ENCODE measurements at regions of chr11 and their contacts with region 1.

Region 1: DNA sequence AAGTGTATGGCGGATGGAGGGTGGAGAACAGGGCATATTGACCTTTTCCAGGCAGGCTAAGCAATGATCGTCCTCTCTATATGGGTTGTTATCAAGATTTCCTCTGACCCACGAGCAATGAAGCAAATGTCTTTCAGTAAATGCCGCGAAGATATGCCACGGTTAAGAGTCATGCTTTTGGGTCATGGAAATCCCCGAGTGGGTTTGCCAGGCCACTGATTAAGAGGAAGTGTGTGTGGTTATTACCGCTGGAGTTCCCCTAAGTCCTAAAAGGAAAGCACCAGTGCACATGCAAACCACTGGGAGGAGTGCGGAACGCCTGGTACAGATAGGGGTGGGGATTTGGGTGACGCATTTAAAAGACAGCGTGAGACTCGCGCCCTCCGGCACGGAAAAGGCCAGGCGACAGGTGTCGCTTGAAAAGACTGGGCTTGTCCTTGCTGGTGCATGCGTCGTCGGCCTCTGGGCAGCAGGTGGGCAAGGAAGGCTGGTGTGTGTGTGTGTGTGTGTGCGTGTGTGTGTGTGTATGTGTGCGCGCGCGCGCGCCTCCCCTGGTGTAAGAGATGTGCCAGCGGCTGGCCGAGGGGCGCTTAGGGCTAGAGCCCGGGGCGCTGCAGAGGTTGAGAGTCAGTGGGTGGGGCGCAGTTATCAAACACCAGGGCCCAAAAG is at the start of gene BIRC3:
- DNase-seq: peak; percentile 92
- ATAC-seq: peak; percentile 90
- H3K4me3 Mint-ChIP-seq: peak within 1 kb of the TSS; percentile 89
- H3K27ac Mint-ChIP-seq: peak within 1 kb of the TSS; percentile 94
- H3K4me1 Mint-ChIP-seq: peaks cover 66% of the 10 kb centered on the region
- H3K27me3 Mint-ChIP-seq: no peaks in the 10 kb centered on the region
- total RNA-seq, gene BIRC3: 12.9 to 14.5 TPM

Region 2: GRCh38 chr11:102064316-102064715 is 252.9 kb before region 1 on chr11:
- CTCF ChIA-PET with region 1: no interaction called
- POLR2A ChIA-PET with region 1: no interaction called
- DNase-seq: no peak
- ATAC-seq: no peak
- H3K4me3 Mint-ChIP-seq: no peak overlapping the region
- H3K27ac Mint-ChIP-seq: no peak overlapping the region
- H3K4me1 Mint-ChIP-seq: no peaks in the 10 kb centered on the region
- H3K27me3 Mint-ChIP-seq: peaks cover 2% of the 10 kb centered on the region

Region 3: DNA sequence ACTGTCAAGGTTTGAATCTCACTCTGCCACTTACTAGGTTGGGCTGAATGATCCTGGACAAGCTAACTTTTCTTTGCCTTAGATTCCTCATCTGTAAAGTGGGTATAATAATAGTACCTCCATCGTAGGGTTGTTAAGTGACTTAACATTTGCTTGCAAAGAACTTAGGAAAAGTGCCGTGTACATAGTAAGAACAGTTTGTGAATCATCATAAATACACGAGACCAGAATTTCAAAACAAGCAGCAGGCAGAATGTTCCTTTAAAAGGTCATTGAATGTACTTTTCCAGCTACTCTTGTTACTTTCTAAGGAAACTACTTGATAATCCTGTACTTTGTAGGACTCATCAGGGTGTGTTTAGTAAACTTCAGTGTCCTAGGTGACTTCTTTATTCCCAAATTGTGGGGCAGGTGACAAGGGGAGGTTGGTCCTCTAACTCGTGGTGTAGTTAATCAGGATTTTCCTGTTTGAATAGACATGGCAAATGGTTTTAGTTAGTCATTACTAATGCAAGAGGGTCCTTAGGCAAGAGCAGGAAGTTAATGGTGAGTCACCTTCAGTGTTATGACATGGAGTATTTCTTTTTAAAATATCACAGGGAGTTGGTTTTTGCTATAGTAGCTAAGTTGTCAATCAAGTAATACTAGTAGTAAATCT is 139.1 kb before region 1 on chr11:
- CTCF ChIA-PET with region 1: no interaction called
- POLR2A ChIA-PET with region 1: no interaction called
- DNase-seq: no peak
- ATAC-seq: no peak
- H3K4me3 Mint-ChIP-seq: no peak overlapping the region
- H3K27ac Mint-ChIP-seq: no peak overlapping the region
- H3K4me1 Mint-ChIP-seq: no peaks in the 10 kb centered on the region
- H3K27me3 Mint-ChIP-seq: no peaks in the 10 kb centered on the region

Region 4: DNA sequence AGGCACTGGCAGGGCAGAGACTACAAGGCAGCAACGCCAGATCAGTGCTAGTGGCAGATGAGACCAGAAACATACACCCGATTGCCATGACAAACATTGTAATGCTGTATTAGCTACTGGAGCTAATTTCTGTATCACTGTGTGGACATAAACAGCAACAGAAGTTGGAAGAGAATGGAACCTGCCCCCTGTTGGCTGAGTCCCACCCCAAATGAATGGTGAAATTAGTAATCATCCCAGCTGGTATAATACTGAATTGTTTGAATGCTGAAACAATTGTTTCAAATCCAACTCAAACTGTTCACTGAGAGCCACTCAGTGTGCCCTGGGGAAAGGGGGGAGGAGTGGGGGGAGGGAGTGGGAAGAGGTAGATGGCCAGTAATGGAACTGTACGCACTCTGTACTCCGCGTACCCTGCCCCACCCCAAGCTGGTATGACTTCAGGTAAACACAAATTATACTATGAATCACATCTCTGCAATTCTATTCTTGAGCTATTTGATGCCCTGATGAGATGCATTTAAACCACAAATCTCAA is 11.1 kb before region 1 on chr11:
- CTCF ChIA-PET with region 1: interaction called, 33 read pairs
- POLR2A ChIA-PET with region 1: interaction called, 25 read pairs
- DNase-seq: no peak
- ATAC-seq: peak; percentile 36
- H3K4me3 Mint-ChIP-seq: peak overlapping the region; percentile 34
- H3K27ac Mint-ChIP-seq: peak overlapping the region; percentile 85
- H3K4me1 Mint-ChIP-seq: peaks cover 60% of the 10 kb centered on the region
- H3K27me3 Mint-ChIP-seq: no peaks in the 10 kb centered on the region

Region 5: GRCh38 chr11:102485095-102485722 is 168.0 kb after region 1 on chr11:
- CTCF ChIA-PET with region 1: no interaction called
- POLR2A ChIA-PET with region 1: no interaction called
- DNase-seq: no peak
- ATAC-seq: no peak
- H3K4me3 Mint-ChIP-seq: no peak overlapping the region
- H3K27ac Mint-ChIP-seq: no peak overlapping the region
- H3K4me1 Mint-ChIP-seq: peaks cover 21% of the 10 kb centered on the region
- H3K27me3 Mint-ChIP-seq: no peaks in the 10 kb centered on the region